Brain microvascular endothelial cell (primary cell): ENCODE measurements at regions of chr9 and their contacts with region 1.

Region 1: DNA sequence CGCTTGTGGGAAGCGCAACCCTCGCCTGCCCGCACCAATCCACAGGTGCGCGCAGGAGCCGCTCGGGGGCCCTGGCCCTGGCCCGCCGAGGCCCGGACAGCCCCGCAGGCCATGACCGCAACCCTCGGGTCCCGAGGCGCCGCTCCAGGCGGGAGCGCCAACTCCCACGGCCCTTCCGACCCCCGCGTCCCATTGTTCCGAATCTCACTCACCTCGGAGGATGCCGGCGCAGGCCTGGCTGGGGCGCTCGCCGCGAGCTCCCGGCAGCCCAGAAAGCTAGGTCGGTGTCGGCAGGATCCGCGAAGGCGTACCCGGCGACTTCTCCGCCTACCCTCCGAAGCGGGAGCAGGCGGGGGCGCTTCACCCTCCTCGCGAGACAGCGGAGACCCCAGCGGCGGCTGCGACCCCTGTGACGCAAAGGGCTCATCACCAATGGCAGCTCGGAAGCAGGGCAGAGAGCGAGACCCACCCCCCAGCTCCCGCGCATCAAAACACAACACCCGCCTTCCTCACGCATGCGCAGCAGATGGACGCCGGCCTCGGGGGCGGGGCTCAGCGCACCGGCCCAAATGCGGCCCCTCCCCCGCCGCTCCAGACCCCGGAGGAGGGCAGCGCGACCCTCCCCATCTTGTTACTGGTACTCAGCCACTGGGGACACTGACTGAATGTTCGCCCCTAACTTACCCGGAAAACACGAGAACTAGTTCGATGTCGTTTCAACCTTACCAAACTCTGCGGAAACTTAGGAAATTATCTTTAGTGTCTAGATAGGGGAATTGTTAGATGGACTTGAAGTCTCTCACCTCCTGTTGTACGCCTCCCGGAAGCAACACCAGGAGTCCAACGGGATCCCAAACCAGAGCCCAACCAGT is 1.3 kb upstream of the SMIM27 start:
- DNase-seq: peak; percentile 91
- H3K4me3 ChIP-seq: peak overlapping the region; percentile 85
- H3K27ac ChIP-seq: peak overlapping the region; percentile 90
- H3K27me3 ChIP-seq: no peaks in the 10 kb centered on the region
- CTCF ChIP-seq: no peak

Region 2: DNA sequence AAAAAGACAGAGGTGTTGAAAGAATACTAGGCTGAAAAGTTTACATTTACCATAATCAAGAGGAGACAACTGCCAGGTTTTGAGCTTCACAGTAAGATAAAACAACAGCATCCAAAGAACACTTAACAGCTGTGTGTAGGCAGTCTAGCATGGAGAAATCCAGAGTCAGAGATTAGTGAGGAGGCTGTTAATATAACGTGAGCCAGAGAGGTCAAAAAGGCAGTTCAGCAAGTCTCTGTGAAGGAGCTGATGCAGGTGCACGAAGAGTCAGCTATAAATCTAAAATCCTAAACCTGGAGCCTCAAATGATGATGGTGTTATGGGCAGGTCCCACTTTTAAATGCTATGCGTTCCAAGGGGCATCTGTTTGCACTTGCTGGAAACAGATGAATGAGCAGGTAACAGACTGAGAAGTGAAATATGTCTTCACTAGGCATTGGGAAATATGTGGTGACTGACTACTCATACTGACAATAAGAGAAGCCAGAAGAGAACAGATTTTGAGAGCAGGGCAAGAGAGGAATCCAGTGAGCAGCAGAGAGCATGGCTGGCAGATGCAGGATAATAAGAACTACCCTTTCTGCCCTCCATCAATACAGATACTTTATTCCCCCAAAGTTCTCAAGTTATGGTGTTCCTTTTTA is 441.9 kb after region 1 on chr9:
- in situ Hi-C with region 1: loop called (anchors 25 kb)
- DNase-seq: no peak
- H3K4me3 ChIP-seq: no peak overlapping the region
- H3K27ac ChIP-seq: no peak overlapping the region
- H3K27me3 ChIP-seq: no peaks in the 10 kb centered on the region
- CTCF ChIP-seq: no peak